Right lobe of liver (tissue), 6 donors: ENCODE measurements at regions of chr18 and their contacts with region 1.

Region 1: GRCh38 chr18:9055185-9055584 is 47.3 kb upstream of the NDUFV2 start:
- DNase-seq: no peak
- ATAC-seq: peak; percentile 57 to 90 (median 80)
- H3K4me3 ChIP-seq: no peak overlapping the region
- H3K27ac ChIP-seq: no peak overlapping the region
- H3K4me1 ChIP-seq: peaks cover 0 to 8% (median 4%) of the 10 kb centered on the region in 4 donors
- H3K27me3 ChIP-seq: no peaks in the 10 kb centered on the region
- CTCF ChIP-seq: peak in 3 of 4 donors; percentile 27 to 38 (median 31)
- POLR2A ChIP-seq: no peak

Region 2: GRCh38 chr18:8988261-8988871 is 66.8 kb before region 1 on chr18:
- intact Hi-C with region 1: loop called in 1 of 2 experiments (anchors 10 kb)
- DNase-seq: peak in 2 of 3 donors; percentile 55 to 67
- ATAC-seq: peak; percentile 46 to 59 (median 50)
- H3K4me3 ChIP-seq: no peak overlapping the region
- H3K27ac ChIP-seq: peak overlapping the region; percentile 62 to 97 (median 73)
- H3K4me1 ChIP-seq: peaks cover 0 to 28% (median 12%) of the 10 kb centered on the region in 4 donors
- H3K27me3 ChIP-seq: no peaks in the 10 kb centered on the region
- CTCF ChIP-seq: peak; percentile 52 to 78 (median 74)
- POLR2A ChIP-seq: no peak